ENCODE measurements at regions of chr20 and their contacts with region 1.

Region 1: GRCh38 chr20:44138867-44139266 is 48.1 kb downstream of the JPH2 start:
- DNase-seq: no peak
- ATAC-seq: no peak

Region 2: DNA sequence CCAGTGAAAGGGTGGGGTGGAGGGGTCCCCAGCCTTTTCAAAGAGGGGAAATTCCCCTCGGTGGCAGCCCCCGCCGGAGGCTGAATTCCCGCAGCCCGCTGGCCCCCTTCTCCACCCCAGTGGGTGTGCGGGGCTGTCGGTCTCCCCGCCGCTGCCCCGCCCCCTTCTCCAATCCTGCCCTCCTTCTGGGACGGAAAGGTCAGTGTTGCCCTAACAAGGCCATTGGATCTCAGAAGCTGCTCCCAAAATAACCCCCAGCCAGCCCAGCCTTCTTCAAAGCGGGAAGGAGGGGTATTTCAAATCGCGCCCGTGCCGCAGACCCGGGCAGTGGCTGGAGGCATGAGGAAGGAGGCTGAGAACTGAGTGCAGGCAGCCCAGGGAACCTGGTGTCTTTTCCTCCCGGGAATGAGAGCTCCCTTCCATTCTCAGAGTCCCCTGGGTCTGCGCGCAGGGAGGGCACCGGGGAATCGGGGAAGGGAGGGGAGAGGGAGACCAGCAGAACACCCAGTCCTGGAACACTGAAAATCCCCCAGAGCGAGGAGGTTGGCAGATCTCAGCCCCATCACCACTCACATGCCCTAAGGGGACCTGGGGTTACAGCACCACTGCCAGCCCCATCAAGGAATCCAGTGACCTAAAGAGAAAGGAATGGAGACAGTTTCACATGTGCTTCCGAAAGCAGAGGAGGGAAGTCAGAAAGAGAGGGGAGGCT is 48.3 kb after region 1 on chr20 and contains the start of gene JPH2:
- intact Hi-C with region 1: loop called (anchors 2 kb)
- DNase-seq: peak; percentile 78
- ATAC-seq: peak; percentile 88
- total RNA-seq, gene JPH2: 197 TPM